A549 (cell line): ENCODE measurements at regions of chr17 and their contacts with region 1.

Region 1: DNA sequence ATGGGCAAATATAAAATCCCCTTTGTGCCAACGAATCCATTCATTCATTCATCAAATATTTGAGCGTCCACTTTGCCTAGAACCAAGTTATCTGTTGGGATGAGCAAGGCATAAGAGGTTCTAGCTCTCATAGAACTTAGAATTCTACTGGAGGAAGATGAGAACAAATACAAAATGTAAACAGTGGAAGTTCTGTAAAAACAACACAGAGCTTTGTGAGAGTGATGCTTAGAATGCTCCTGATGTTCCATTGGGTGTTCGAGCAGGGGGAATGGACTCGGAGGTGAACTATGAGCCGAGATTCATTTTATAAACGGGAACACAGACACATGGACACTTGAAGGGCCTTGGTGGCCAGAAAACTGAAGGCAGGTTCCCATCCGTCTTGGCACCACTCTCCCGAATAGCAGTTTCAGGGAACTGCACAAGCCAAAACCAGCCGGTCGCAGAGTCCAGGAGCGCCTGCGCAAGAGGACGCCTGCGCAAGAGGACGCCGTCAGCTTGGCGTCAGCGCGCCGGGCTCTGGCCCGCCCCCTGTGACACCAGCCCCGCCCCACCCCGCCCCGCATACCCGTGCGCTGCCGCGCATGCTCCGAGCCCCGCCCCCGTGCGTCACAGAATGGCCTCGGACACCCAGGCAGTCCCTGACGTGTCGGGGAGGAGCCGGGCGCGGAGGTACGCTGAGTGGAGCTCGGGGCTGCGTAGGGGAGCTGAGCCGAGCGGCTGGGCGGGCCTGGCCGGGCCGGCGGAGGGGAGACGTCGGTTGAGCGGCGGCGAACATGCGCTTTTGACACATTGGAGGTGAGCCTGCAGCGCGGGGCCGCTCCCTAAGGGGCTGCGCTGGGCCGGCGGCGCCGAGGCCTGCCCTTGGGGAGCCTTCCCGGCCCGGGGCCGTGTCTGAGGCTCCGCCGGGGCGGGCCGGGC is at the start of gene NDEL1:
- DNase-seq: peak; percentile 98 to 100
- ATAC-seq: peak; percentile 96 to 99
- H3K4me3 ChIP-seq: peak within 1 kb of the TSS; percentile 95
- H3K27ac ChIP-seq: peak within 1 kb of the TSS; percentile 94 to 95
- H3K4me1 ChIP-seq: peaks cover 10% of the 10 kb centered on the region; the same call in 2 of the 3 replicates
- CTCF ChIP-seq: no peak
- EP300 ChIP-seq: no peak
- POLR2A ChIP-seq: peak; percentile 84
- RAD21 ChIP-seq: no peak; a peak in 1 of 5 replicates
- polyA plus RNA-seq, gene NDEL1: 71.0 and 91.0 TPM in 2 replicates

Region 2: GRCh38 chr17:8376271-8377067 is 59.0 kb before region 1 on chr17 and contains the start of gene KRABD2:
- CTCF ChIA-PET with region 1: interaction called, 3 read pairs
- POLR2A ChIA-PET with region 1: interaction called, 10 read pairs
- DNase-seq: peak; percentile 92 to 99
- ATAC-seq: peak; percentile 93 to 95
- H3K4me3 ChIP-seq: peak within 1 kb of the TSS; percentile 50
- H3K27ac ChIP-seq: peak within 1 kb of the TSS; percentile 76 to 93
- H3K4me1 ChIP-seq: peaks cover 55% of the 10 kb centered on the region
- CTCF ChIP-seq: peak; percentile 38
- EP300 ChIP-seq: no peak
- POLR2A ChIP-seq: peak; percentile 93
- RAD21 ChIP-seq: no peak

Region 3: GRCh38 chr17:8420041-8420934 is 15.2 kb before region 1 on chr17:
- CTCF ChIA-PET with region 1: interaction called, 4 read pairs
- POLR2A ChIA-PET with region 1: interaction called, 21 read pairs
- DNase-seq: peak in 1 of 2 experiments; percentile 85
- ATAC-seq: peak; percentile 79 to 81
- H3K4me3 ChIP-seq: no peak overlapping the region
- H3K27ac ChIP-seq: peak overlapping the region in 1 of 2 experiments; percentile 5; a peak in 2 of 6 replicates
- H3K4me1 ChIP-seq: peaks cover 43% of the 10 kb centered on the region
- CTCF ChIP-seq: no peak
- EP300 ChIP-seq: peak in 1 of 2 experiments; percentile 43; a peak in 1 of 5 replicates
- POLR2A ChIP-seq: no peak
- RAD21 ChIP-seq: no peak

Region 4: DNA sequence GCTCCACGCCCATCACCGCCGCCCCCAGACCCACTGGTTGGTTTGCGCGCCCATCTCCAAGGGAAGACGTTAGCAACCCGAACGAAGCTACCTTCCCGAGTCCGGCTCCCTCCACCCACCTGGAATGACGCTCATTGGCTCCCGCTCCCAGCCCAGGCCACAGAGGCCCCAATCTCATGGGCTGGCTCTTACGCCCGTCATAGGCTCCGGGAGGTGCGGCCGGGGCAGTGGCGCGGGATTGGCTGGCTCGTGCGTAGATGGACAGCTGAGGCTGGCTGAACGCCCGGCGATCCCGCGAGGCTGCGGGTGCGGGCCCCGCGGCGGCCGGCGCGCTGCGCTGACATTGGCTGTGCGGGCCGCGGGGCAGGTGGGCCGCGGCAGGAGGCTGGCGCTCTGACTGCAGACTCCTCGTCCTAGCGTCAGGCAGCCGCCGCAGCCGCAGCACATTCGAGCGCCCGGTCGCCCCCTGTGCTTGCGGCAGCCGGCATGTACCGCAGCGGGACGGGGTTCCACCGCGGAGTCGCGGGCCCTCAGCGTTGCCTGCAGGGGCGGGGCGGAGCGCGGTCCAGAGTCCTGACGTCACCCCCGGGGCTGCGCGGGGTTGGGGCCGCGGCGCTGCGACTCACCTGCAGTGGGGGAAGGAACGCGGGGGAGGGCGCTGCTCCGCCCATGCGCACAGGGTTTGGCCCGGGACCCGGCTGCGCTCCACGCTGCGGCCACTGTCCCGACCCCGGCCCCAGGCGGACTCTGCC is 195.5 kb after region 1 on chr17:
- CTCF ChIA-PET with region 1: no interaction called
- POLR2A ChIA-PET with region 1: interaction called, 14 read pairs
- DNase-seq: peak; percentile 100
- ATAC-seq: peak; percentile 95 to 98
- H3K4me3 ChIP-seq: peak overlapping the region; percentile 95
- H3K27ac ChIP-seq: peak overlapping the region; percentile 94 to 95
- H3K4me1 ChIP-seq: peaks cover 13% of the 10 kb centered on the region
- CTCF ChIP-seq: 0 out of 3 replicates have a peak, but pooled peaks have one; percentile 13
- EP300 ChIP-seq: no peak
- POLR2A ChIP-seq: peak; percentile 64; the same call in 1 of the 2 replicates
- RAD21 ChIP-seq: 0 out of 5 replicates have a peak, but pooled peaks of 1 of the 2 experiments have one; percentile 21